ENCODE measurements at regions of chr18 and their contacts with region 1.

Region 1: DNA sequence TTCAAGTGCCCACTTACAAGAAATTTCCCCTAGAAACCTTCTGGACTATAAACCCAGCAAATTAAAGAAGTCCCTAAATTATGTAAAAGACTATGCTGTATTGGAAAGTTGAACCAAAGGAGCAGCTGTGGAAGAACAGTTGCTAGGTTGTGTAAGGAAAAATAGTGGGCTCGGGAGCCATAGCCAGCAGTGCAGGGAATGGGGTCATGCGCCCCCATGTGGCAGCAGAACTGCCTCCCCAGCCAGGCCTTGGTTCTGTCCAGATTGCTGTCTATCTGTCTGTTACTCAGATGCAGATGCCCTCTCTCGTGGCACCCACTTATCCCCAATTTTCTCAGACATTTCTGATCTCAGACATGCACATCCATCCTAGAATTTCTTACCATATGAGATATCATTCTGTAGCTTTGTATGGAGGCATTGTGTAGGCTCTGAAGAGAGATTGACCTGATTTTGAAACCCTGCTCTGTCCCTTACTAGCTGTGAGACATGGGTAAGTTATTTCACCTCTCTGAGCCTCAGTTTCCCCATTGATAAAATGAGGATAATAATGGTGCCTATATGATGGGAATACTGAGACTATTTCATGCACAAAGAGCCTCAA is 258.3 kb downstream of the SS18 start:
- DNase-seq: peak; percentile 6
- ATAC-seq: peak; percentile 93
- H3K4me3 ChIP-seq: no peak overlapping the region
- H3K27ac ChIP-seq: no peak overlapping the region
- H3K4me1 ChIP-seq: no peaks in the 10 kb centered on the region
- H3K27me3 ChIP-seq: peaks cover 9% of the 10 kb centered on the region
- CTCF ChIP-seq: peak; percentile 38 to 93 (median 89); a peak in 4 of 6 replicates
- POLR2A ChIP-seq: no peak
- RAD21 ChIP-seq: peak; percentile 63

Region 2: GRCh38 chr18:24885276-24885675 is 946.8 kb before region 1 on chr18:
- CTCF ChIA-PET with region 1: no interaction called
- POLR2A ChIA-PET with region 1: no interaction called
- RAD21 ChIA-PET with region 1: no interaction called
- intact Hi-C with region 1: loop called (anchors 10 kb)
- DNase-seq: no peak
- ATAC-seq: no peak
- H3K4me3 ChIP-seq: no peak overlapping the region
- H3K27ac ChIP-seq: no peak overlapping the region
- H3K4me1 ChIP-seq: no peaks in the 10 kb centered on the region
- H3K27me3 ChIP-seq: no peaks in the 10 kb centered on the region
- CTCF ChIP-seq: no peak
- POLR2A ChIP-seq: no peak
- RAD21 ChIP-seq: no peak

Region 3: DNA sequence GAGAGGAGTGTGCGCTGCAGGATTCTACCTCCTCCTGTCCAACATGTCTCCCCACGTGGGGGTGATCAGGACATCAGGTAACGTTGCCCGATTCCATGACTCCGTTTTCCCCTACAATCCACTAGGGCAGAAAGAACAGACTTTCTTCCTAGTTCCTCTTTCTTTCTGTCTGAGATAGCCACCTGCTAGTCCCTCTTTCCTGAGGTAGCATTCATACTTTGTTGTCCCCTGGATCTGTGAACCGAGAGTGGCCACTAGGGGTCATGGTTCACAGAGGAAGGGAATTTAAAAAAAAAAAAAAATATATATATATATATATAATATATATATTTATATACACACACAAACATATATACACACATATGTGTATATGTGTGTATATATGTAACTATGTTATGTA is 270.2 kb before region 1 on chr18:
- CTCF ChIA-PET with region 1: no interaction called
- POLR2A ChIA-PET with region 1: no interaction called
- RAD21 ChIA-PET with region 1: no interaction called
- intact Hi-C with region 1: loop called (anchors 10 kb)
- DNase-seq: no peak
- ATAC-seq: no peak
- H3K4me3 ChIP-seq: no peak overlapping the region
- H3K27ac ChIP-seq: no peak overlapping the region
- H3K4me1 ChIP-seq: no peaks in the 10 kb centered on the region
- H3K27me3 ChIP-seq: no peaks in the 10 kb centered on the region
- CTCF ChIP-seq: peak in 2 of 3 experiments; percentile 24 to 35; a peak in 3 of 6 replicates
- POLR2A ChIP-seq: no peak
- RAD21 ChIP-seq: no peak

Region 4: GRCh38 chr18:25814841-25815458 is 17.2 kb before region 1 on chr18:
- CTCF ChIA-PET with region 1: no interaction called
- POLR2A ChIA-PET with region 1: no interaction called
- RAD21 ChIA-PET with region 1: no interaction called
- intact Hi-C with region 1: no loop called
- DNase-seq: no peak
- ATAC-seq: no peak
- H3K4me3 ChIP-seq: no peak overlapping the region
- H3K27ac ChIP-seq: no peak overlapping the region
- H3K4me1 ChIP-seq: no peaks in the 10 kb centered on the region
- H3K27me3 ChIP-seq: peaks cover 52% of the 10 kb centered on the region
- CTCF ChIP-seq: no peak
- POLR2A ChIP-seq: no peak
- RAD21 ChIP-seq: no peak